GM12878 (cell line): ENCODE measurements at regions of chr15 and their contacts with region 1.

Region 1: GRCh38 chr15:86743283-86743903 is 663.7 kb downstream of the AGBL1 start:
- DNase-seq: no peak
- ATAC-seq: no peak
- H3K4me3 ChIP-seq: no peak overlapping the region
- H3K27ac ChIP-seq: no peak overlapping the region
- H3K4me1 ChIP-seq: no peaks in the 10 kb centered on the region
- H3K27me3 ChIP-seq: no peaks in the 10 kb centered on the region
- CTCF ChIP-seq: peak; percentile 40 to 48 (median 43); a peak in 5 of 6 replicates
- EP300 ChIP-seq: no peak
- POLR2A ChIP-seq: no peak
- RAD21 ChIP-seq: peak; percentile 49

Region 2: GRCh38 chr15:86115144-86115801 is 628.1 kb before region 1 on chr15:
- CTCF ChIA-PET with region 1: interaction called, 4 read pairs
- POLR2A ChIA-PET with region 1: no interaction called
- RAD21 ChIA-PET with region 1: no interaction called
- SMC1A ChIA-PET with region 1: no interaction called
- in situ Hi-C with region 1: no loop called
- intact Hi-C with region 1: loop called (anchors 10 kb)
- DNase-seq: no peak
- ATAC-seq: no peak
- H3K4me3 ChIP-seq: no peak overlapping the region
- H3K27ac ChIP-seq: no peak overlapping the region
- H3K4me1 ChIP-seq: no peaks in the 10 kb centered on the region
- H3K27me3 ChIP-seq: no peaks in the 10 kb centered on the region
- CTCF ChIP-seq: peak in 2 of 3 experiments; percentile 4 to 21; a peak in 1 of 6 replicates
- EP300 ChIP-seq: no peak
- POLR2A ChIP-seq: no peak
- RAD21 ChIP-seq: no peak

Region 3: DNA sequence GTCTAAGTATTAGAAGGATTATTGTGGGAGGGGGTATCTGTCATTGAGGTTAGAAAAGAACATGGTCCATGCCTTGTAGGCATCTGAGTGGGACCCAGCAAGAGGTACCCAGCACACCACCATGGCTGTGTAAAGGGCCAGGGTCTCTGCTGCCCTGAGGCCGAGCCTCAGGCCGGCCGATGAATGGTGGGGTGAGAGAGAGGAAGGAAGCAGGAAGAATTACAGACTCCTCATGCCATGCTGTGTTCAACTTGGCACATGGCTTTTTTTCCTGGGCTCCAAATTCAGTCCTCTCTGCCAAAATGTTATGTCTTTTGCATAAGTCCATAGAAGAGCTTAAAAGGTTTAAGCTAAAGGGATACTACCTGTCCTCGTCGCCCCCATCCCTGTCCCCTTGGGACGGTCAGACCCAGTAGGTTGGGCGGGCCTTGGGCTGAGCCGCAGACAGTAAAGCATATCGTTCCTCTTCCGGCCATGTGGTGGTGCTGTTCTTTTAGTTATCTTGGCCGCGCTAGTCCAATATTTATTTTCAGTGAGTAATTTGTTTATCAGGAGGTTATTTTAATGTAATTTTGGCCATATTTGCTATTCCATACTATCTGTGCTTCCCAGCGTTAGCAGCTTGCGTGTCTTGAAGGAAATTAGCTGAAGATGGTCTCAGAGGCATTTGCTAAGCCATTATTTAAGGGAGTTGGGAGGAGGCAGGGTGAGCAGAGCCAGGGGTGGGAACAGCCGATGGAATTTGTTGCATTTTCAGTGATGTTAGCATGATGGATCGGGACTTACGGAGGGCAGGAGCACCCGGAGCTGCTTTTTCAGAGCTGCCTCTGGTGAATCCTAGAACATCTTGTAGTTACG is 511.3 kb before region 1 on chr15:
- CTCF ChIA-PET with region 1: interaction called, 41 read pairs
- POLR2A ChIA-PET with region 1: no interaction called
- RAD21 ChIA-PET with region 1: interaction called, 7 read pairs
- SMC1A ChIA-PET with region 1: interaction called, 28 read pairs
- in situ Hi-C with region 1: no loop called
- intact Hi-C with region 1: loop called (anchors 5 kb)
- DNase-seq: no peak
- ATAC-seq: peak; percentile 74
- H3K4me3 ChIP-seq: no peak overlapping the region
- H3K27ac ChIP-seq: no peak overlapping the region
- H3K4me1 ChIP-seq: no peaks in the 10 kb centered on the region
- H3K27me3 ChIP-seq: no peaks in the 10 kb centered on the region
- CTCF ChIP-seq: peak; percentile 51 to 64 (median 55); a peak in 5 of 6 replicates
- EP300 ChIP-seq: no peak
- POLR2A ChIP-seq: no peak
- RAD21 ChIP-seq: peak; percentile 58

Region 4: GRCh38 chr15:86316726-86317383 is 426.5 kb before region 1 on chr15:
- CTCF ChIA-PET with region 1: no interaction called
- POLR2A ChIA-PET with region 1: no interaction called
- RAD21 ChIA-PET with region 1: no interaction called
- SMC1A ChIA-PET with region 1: no interaction called
- in situ Hi-C with region 1: no loop called
- intact Hi-C with region 1: no loop called
- DNase-seq: no peak
- ATAC-seq: no peak
- H3K4me3 ChIP-seq: no peak overlapping the region
- H3K27ac ChIP-seq: no peak overlapping the region
- H3K4me1 ChIP-seq: no peaks in the 10 kb centered on the region
- H3K27me3 ChIP-seq: no peaks in the 10 kb centered on the region
- CTCF ChIP-seq: no peak
- EP300 ChIP-seq: no peak
- POLR2A ChIP-seq: no peak
- RAD21 ChIP-seq: no peak

Region 5: DNA sequence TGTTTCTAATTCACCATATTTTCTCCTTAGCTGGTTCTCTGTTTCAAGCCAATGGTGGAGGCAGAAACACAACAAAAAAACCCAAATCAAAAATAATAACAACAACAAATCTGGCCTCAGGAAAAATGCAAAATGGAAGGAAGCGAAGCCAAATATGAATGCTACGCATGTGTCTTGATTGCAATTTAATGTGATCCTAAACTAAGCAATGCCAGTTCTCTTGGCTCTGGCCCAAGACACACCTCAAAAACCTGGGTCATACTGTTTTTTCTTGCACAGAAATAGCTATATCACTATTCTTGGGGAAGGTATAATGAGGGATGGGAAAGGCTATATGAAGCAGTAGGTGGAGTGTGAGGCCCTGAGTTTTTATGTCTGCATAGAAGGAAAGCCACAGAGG is 61.0 kb after region 1 on chr15:
- CTCF ChIA-PET with region 1: no interaction called
- POLR2A ChIA-PET with region 1: no interaction called
- RAD21 ChIA-PET with region 1: no interaction called
- SMC1A ChIA-PET with region 1: no interaction called
- in situ Hi-C with region 1: no loop called
- intact Hi-C with region 1: no loop called
- DNase-seq: no peak
- ATAC-seq: no peak
- H3K4me3 ChIP-seq: no peak overlapping the region
- H3K27ac ChIP-seq: no peak overlapping the region
- H3K4me1 ChIP-seq: no peaks in the 10 kb centered on the region
- H3K27me3 ChIP-seq: no peaks in the 10 kb centered on the region
- CTCF ChIP-seq: no peak
- EP300 ChIP-seq: no peak
- POLR2A ChIP-seq: no peak
- RAD21 ChIP-seq: no peak